ENCODE measurements at regions of chr6 and their contacts with region 1.

Region 1: GRCh38 chr6:99425647-99426453 is 742 bp upstream of the PNISR start:
- DNase-seq: peak; percentile 91 to 92
- ATAC-seq: peak; percentile 95
- H3K4me3 ChIP-seq: peak overlapping the region; percentile 81 to 99
- H3K27ac ChIP-seq: peak overlapping the region; percentile 84 to 95
- H3K4me1 ChIP-seq: peaks cover 0 to 9% of the 10 kb centered on the region in 2 donors
- H3K27me3 ChIP-seq: no peaks in the 10 kb centered on the region

Region 2: GRCh38 chr6:99330159-99330558 is 95.7 kb before region 1 on chr6:
- intact Hi-C with region 1: loop called in 1 of 2 experiments (anchors 10 kb)
- DNase-seq: peak in 1 of 2 donors; percentile 53
- ATAC-seq: no peak
- H3K4me3 ChIP-seq: no peak overlapping the region
- H3K27ac ChIP-seq: no peak overlapping the region
- H3K4me1 ChIP-seq: no peaks in the 10 kb centered on the region
- H3K27me3 ChIP-seq: no peaks in the 10 kb centered on the region

Region 3: GRCh38 chr6:99349171-99350141 is 76.4 kb before region 1 on chr6 and contains the start of gene FAXC:
- intact Hi-C with region 1: loop called in 1 of 2 experiments (anchors 5 kb)
- DNase-seq: peak; percentile 50 to 77
- ATAC-seq: peak; percentile 58
- H3K4me3 ChIP-seq: peak within 1 kb of the TSS; percentile 52 to 79
- H3K27ac ChIP-seq: peak within 1 kb of the TSS in 1 of 2 donors; percentile 10
- H3K4me1 ChIP-seq: no peaks in the 10 kb centered on the region
- H3K27me3 ChIP-seq: no peaks in the 10 kb centered on the region
- total RNA-seq, gene FAXC: 3.8 to 4.4 TPM

Region 4: GRCh38 chr6:99568103-99568933 is 142.5 kb after region 1 on chr6 and contains the start of gene CCNC:
- intact Hi-C with region 1: loop called in 1 of 2 experiments (anchors 5 kb)
- DNase-seq: peak; percentile 96
- ATAC-seq: peak; percentile 100
- H3K4me3 ChIP-seq: peak within 1 kb of the TSS; percentile 78 to 83
- H3K27ac ChIP-seq: no peak within 1 kb of the TSS
- H3K4me1 ChIP-seq: no peaks in the 10 kb centered on the region
- H3K27me3 ChIP-seq: no peaks in the 10 kb centered on the region
- total RNA-seq, gene CCNC: 37.2 to 40.4 TPM

Measured in aorta (tissue), 5 donors.